ENCODE measurements at regions of chr3 and their contacts with region 1.

Region 1: GRCh38 chr3:50982540-50983325 is 308.0 kb downstream of the DOCK3 start:
- DNase-seq: no peak
- H3K4me3 Mint-ChIP-seq: no peak overlapping the region
- H3K27ac Mint-ChIP-seq: no peak overlapping the region
- H3K4me1 Mint-ChIP-seq: no peaks in the 10 kb centered on the region
- H3K27me3 Mint-ChIP-seq: peaks cover 2% of the 10 kb centered on the region

Region 2: GRCh38 chr3:50971487-50971924 is 11.2 kb before region 1 on chr3:
- CTCF ChIA-PET with region 1: interaction called, 13 read pairs
- POLR2A ChIA-PET with region 1: no interaction called
- intact Hi-C with region 1: no loop called
- DNase-seq: peak; percentile 61
- H3K4me3 Mint-ChIP-seq: no peak overlapping the region
- H3K27ac Mint-ChIP-seq: no peak overlapping the region
- H3K4me1 Mint-ChIP-seq: peaks cover 12% of the 10 kb centered on the region
- H3K27me3 Mint-ChIP-seq: no peaks in the 10 kb centered on the region